Activated naive CD4-positive, alpha-beta T cell treated with anti-CD3 and anti-CD28 coated beads for 36 hours (primary cell): ENCODE measurements at regions of chr5 and their contacts with region 1.

Region 1: GRCh38 chr5:76771705-76772405 is 47.0 kb upstream of the F2RL1 start:
- DNase-seq: no peak
- H3K4me3 Mint-ChIP-seq: no peak overlapping the region
- H3K27ac Mint-ChIP-seq: no peak overlapping the region
- H3K4me1 Mint-ChIP-seq: peaks cover 2% of the 10 kb centered on the region
- H3K27me3 Mint-ChIP-seq: no peaks in the 10 kb centered on the region

Region 2: DNA sequence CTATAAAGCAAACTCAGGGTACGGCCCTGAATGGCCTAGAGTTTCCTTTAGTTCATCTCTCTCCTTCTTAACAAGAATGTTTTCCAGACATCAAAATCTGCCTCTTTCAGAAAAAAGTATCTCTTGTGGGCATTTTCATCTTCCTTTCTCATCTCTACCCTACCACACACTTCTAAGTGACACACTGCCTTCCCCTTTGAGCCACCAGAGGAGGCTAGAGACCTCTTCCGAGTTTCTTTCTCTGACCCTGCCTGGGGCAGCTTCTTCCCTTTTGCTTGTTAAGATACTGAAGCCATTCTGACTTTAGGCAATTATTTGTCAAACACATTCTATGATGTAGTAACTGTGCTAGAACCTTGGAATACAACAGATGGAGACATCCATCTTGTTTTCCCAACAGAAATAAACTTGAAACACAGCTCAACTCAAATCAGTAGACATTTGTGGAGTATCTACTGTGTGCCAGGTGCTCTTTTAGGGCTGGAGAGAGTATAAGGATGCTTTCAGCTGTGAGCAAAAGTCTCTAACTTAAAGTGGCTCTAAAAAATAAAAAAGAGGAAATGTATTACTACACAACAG is 697.3 kb before region 1 on chr5:
- CTCF ChIA-PET with region 1: no interaction called
- intact Hi-C with region 1: loop called (anchors 2 kb)
- DNase-seq: peak; percentile 48
- H3K4me3 Mint-ChIP-seq: no peak overlapping the region
- H3K27ac Mint-ChIP-seq: no peak overlapping the region
- H3K4me1 Mint-ChIP-seq: no peaks in the 10 kb centered on the region
- H3K27me3 Mint-ChIP-seq: peaks cover 36% of the 10 kb centered on the region

Region 3: GRCh38 chr5:76180814-76181805 is 590.7 kb before region 1 on chr5:
- CTCF ChIA-PET with region 1: no interaction called
- intact Hi-C with region 1: no loop called
- DNase-seq: peak; percentile 11
- H3K4me3 Mint-ChIP-seq: no peak overlapping the region
- H3K27ac Mint-ChIP-seq: no peak overlapping the region
- H3K4me1 Mint-ChIP-seq: peaks cover 4% of the 10 kb centered on the region
- H3K27me3 Mint-ChIP-seq: no peaks in the 10 kb centered on the region

Region 4: DNA sequence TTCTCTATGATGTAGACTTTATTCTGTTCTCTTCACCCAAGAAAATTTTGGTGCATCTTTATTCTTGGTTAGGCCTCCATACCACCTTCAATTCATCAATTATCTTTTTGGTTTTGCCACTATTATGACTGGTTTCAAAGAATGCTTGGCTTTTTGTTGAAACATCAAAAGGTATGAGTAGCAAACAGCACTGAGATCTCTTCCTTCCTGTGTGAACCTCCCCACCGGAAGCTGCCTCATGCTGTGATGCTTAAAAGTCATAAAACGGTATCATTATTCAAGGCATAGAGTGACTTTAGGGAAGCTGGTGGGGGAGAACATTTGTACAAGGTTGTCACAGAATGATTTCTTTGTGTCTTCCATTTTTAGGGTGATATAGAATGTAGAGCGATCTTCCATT is 298.2 kb before region 1 on chr5:
- CTCF ChIA-PET with region 1: no interaction called
- intact Hi-C with region 1: loop called (anchors 10 kb)
- DNase-seq: peak; percentile 90
- H3K4me3 Mint-ChIP-seq: peak overlapping the region; percentile 38
- H3K27ac Mint-ChIP-seq: peak overlapping the region; percentile 92
- H3K4me1 Mint-ChIP-seq: peaks cover 76% of the 10 kb centered on the region
- H3K27me3 Mint-ChIP-seq: no peaks in the 10 kb centered on the region

Region 5: GRCh38 chr5:76608833-76609232 is 163.0 kb before region 1 on chr5:
- CTCF ChIA-PET with region 1: interaction called, 94 read pairs
- intact Hi-C with region 1: no loop called
- DNase-seq: no peak
- H3K4me3 Mint-ChIP-seq: no peak overlapping the region
- H3K27ac Mint-ChIP-seq: no peak overlapping the region
- H3K4me1 Mint-ChIP-seq: peaks cover 6% of the 10 kb centered on the region
- H3K27me3 Mint-ChIP-seq: no peaks in the 10 kb centered on the region

Region 6: DNA sequence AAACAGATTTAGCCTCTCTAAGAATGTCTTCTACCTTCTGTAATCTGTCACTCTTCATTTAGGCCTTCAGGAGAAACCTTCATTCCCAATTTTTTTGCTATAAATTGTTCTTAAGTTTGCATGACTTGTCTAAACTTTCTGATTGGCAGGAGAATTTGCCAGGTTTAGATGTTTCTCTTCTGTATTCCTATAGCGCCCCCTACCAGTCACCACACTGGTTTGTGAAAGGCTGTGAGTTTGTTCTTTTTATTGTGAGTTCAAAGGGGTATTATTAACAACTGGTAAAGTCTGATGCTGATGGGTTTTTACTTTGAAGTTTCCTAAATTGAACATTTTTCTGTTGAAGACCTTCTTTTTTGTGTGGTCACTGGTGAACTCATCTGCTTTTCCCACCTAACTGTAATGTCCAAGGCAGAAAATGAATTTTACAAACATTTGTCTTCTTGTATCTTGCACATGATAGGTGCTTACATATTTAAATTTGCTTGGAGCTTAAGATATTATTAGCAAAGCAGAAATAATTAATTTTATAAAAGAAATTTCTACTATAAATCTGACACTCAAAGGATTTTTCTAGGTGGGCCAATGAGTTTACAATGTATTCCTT is 130.2 kb before region 1 on chr5:
- CTCF ChIA-PET with region 1: interaction called, 14 read pairs
- intact Hi-C with region 1: loop called (anchors 1 kb)
- DNase-seq: peak; percentile 87
- H3K4me3 Mint-ChIP-seq: no peak overlapping the region
- H3K27ac Mint-ChIP-seq: no peak overlapping the region
- H3K4me1 Mint-ChIP-seq: peaks cover 4% of the 10 kb centered on the region
- H3K27me3 Mint-ChIP-seq: no peaks in the 10 kb centered on the region

Region 7: DNA sequence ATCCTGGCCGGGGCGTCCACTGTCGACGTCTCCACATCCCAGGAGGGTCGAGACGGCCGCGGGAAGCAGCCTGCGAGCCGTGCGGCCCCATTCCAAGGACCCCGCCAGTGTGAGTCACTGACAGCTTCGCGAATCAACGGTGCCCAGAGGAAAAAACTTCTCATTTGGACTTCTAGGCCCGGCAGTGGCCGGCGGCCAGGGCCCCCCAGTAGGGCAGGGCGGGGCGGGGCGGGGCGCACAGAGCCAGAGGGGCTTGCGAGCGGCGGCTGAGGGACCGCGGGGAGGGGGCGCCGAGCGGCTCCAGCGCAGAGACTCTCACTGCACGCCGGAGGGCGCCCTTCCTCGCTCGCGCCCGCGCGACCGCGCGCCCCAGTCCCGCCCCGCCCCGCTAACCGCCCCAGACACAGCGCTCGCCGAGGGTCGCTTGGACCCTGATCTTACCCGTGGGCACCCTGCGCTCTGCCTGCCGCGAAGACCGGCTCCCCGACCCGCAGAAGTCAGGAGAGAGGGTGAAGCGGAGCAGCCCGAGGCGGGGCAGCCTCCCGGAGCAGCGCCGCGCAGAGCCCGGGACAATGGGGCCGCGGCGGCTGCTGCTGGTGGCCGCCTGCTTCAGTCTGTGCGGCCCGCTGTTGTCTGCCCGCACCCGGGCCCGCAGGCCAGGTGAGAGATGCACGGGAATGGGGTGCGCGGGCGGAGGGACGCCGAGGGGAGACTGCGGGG is 56.0 kb before region 1 on chr5 and contains the start of gene F2R:
- CTCF ChIA-PET with region 1: interaction called, 17 read pairs
- intact Hi-C with region 1: loop called (anchors 1 kb)
- DNase-seq: peak; percentile 39
- H3K4me3 Mint-ChIP-seq: peak within 1 kb of the TSS; percentile 77
- H3K27ac Mint-ChIP-seq: no peak within 1 kb of the TSS
- H3K4me1 Mint-ChIP-seq: peaks cover 22% of the 10 kb centered on the region
- H3K27me3 Mint-ChIP-seq: peaks cover 48% of the 10 kb centered on the region
- total RNA-seq, gene F2R: 0.42 to 0.43 TPM

Region 8: DNA sequence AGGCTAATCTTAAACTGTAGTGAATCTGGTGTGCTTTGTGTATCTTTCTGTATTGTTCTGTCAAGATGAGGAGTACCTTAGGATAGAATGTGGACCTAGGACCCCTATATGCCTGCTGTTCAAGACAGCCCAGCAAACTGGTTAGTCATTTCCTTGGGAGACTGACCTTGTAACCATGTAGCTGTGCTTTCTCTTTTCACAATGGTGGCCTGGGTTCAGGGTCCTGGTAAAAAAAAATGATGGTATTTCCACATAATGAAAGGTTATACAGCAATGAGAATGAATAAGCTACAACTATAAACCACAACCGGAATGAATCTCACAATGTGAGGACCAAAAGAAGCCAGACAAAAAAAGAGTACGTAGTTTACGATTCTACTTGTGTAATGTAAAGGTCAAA is 10.6 kb after region 1 on chr5:
- CTCF ChIA-PET with region 1: interaction called, 10 read pairs
- intact Hi-C with region 1: no loop called
- DNase-seq: no peak
- H3K4me3 Mint-ChIP-seq: no peak overlapping the region
- H3K27ac Mint-ChIP-seq: no peak overlapping the region
- H3K4me1 Mint-ChIP-seq: no peaks in the 10 kb centered on the region
- H3K27me3 Mint-ChIP-seq: no peaks in the 10 kb centered on the region

Region 9: DNA sequence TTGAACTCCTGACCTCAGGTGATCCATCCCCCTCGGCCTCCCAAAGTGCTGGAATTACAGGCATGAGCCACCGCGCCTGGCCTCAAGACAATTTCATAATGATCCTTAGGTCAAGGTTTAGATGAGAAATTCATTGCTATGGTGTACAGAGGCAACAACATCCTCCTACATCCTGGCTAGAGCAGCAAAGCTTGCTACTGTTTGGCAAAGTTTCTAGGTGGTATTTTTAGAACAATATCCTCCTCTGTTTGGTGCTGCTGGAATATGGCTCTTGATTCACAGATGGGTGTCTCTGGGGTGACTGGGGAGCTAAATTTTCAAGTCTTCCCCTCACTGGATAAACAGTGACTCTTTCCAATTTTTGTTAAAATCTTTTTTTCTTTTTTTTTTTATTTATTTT is 211.6 kb after region 1 on chr5:
- CTCF ChIA-PET with region 1: no interaction called
- intact Hi-C with region 1: no loop called
- DNase-seq: no peak
- H3K4me3 Mint-ChIP-seq: no peak overlapping the region
- H3K27ac Mint-ChIP-seq: no peak overlapping the region
- H3K4me1 Mint-ChIP-seq: no peaks in the 10 kb centered on the region
- H3K27me3 Mint-ChIP-seq: no peaks in the 10 kb centered on the region

Region 10: GRCh38 chr5:78345485-78345884 is 1573.6 kb after region 1 on chr5:
- CTCF ChIA-PET with region 1: no interaction called
- intact Hi-C with region 1: no loop called
- DNase-seq: no peak
- H3K4me3 Mint-ChIP-seq: no peak overlapping the region
- H3K27ac Mint-ChIP-seq: no peak overlapping the region
- H3K4me1 Mint-ChIP-seq: no peaks in the 10 kb centered on the region
- H3K27me3 Mint-ChIP-seq: peaks cover 4% of the 10 kb centered on the region